Naive thymus-derived CD4-positive, alpha-beta T cell (primary cell): ENCODE measurements at regions of chr6 and their contacts with region 1.

Region 1: DNA sequence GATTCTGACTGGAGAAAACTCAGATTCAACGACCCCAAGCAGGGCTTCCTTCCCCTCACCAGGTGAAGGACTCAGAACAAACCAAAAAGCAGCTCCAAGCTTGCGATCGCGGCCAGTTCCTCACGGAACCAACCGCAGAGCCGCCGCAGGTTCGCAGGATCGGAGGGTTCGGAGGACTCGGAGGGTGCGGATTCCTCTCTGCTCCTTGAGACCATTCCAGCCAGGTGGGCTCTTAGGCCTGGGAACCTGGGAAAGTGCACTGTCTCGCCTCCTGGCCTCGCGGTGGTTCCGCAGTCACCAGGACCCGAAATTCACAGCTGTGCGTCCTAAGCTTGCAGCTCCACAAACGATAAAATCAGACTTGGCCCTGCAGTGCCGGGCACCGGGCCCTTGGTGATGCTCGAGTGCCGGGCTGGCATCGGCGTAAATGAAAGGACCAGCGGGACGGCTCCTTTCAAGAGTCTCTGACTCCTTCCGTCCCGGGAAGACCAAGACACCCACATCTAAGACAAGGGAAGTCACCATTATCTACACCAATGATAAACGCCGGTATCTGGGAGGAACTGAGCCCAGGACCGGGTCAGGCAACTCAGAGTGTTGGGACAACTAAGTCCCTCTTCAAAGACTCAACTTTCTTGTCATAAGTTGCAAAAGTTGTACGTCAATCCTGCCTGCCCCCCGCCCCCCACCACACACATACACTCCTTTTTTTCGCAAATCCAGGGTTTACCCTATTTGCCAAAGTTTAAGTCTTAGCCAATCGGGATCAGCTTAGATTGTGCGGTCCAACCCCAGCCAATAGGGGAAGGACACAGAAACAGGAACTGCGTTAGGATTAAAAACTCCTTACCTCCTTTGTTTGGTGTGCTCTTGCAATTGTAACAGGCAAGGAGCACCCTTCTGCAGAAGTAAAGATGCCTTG is 69.8 kb upstream of the PRSS16 start:
- DNase-seq: peak; percentile 49 to 78 (median 66)
- ATAC-seq: peak; percentile 83
- H3K4me3 ChIP-seq: peak overlapping the region; percentile 99
- H3K4me3 Mint-ChIP-seq: peak overlapping the region; percentile 90 to 98 (median 96)
- H3K27ac ChIP-seq: peak overlapping the region; percentile 74
- H3K27ac Mint-ChIP-seq: peak overlapping the region; percentile 79 to 100 (median 95)
- H3K4me1 ChIP-seq: peaks cover 0 to 3% of the 10 kb centered on the region in 2 donors
- H3K4me1 Mint-ChIP-seq: peaks cover 0 to 33% (median 14%) of the 10 kb centered on the region in 7 donors
- H3K27me3 ChIP-seq: no peaks in the 10 kb centered on the region
- H3K27me3 Mint-ChIP-seq: peaks cover 0 to 37% (median 0%) of the 10 kb centered on the region in 5 donors

Region 2: DNA sequence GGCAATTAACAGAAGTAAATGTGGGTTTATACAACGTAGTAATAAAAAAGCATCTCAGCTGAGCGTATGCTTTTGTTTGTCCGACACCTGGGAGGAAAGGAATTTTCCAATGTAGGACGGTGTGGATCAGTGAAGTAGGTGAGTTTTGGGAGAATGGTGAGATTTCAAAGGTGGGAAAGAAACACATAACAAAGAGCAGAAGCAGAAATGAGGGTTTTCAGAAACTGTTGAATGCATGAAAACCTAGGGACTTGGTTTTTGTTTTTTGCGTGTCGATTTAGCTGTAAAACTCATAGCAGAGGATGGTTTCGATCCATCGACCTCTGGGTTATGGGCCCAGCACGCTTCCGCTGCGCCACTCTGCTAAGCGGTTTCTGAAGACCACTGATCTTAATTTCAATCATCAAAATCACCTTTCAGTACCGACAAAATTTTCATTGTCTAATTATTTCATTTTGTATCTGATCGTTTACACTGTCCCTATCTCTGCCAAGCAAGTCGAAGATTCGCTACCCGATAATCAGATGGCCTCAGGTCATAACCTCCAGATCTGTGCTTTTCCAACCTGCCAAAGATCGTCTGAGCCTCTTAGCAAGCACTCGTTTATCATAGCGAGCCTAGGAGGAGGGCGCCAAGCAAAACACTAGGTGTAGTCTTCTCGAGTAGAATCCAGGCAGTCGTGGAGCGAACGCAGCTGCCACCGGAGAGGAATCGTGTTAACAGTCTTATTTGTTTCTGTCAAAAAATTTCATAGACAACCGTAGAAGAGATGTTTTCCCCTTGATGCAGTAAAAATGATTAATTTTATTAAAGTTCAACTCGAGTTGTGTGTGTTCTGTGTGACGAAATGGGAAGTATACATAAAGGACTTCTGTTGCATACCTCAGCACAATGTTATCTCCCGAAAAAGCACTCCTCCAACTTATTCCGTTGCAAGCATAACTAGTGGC is 155.2 kb after region 1 on chr6:
- CTCF ChIA-PET with region 1: no interaction called
- POLR2A ChIA-PET with region 1: interaction called, 3 read pairs
- intact Hi-C with region 1: loop called in 1 of 2 experiments (anchors 5 kb)
- DNase-seq: peak in 8 of 9 donors; percentile 18 to 79 (median 68)
- ATAC-seq: peak; percentile 74
- H3K4me3 ChIP-seq: peak overlapping the region; percentile 60
- H3K4me3 Mint-ChIP-seq: peak overlapping the region; percentile 67 to 94 (median 87)
- H3K27ac ChIP-seq: no peak overlapping the region
- H3K27ac Mint-ChIP-seq: peak overlapping the region; percentile 0 to 97 (median 84)
- H3K4me1 ChIP-seq: peaks cover 0 to 3% of the 10 kb centered on the region in 2 donors
- H3K4me1 Mint-ChIP-seq: peaks cover 7 to 21% (median 13%) of the 10 kb centered on the region in 7 donors
- H3K27me3 ChIP-seq: peaks cover 0 to 8% of the 10 kb centered on the region in 2 donors
- H3K27me3 Mint-ChIP-seq: peaks cover 21 to 53% (median 25%) of the 10 kb centered on the region in 5 donors

Region 3: DNA sequence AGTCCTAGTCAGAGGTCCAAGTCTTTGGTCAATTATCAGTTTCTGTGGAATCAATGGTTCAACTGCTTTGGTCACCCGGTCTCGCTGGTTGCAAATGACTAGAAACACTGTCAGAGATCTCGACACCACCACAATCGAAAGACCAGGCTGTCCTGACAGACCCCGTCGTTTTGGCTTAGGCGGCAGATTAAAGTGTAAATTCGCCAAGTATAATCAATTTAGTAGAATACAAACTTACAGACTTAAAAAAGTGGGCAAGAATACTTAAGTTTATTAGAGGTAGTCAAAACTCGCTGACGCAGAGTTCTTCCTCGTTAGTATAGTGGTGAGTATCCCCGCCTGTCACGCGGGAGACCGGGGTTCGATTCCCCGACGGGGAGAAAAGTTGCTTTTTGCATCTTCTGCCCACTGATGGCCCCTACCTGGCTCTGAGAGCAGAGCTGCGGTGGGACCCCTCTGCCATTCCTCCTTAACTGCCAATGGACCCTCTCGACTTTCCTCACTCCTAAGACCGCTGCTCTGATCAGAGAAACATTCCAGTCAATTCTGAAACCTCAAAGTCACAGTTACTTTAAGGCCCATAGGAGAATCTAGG is 325.8 kb after region 1 on chr6:
- CTCF ChIA-PET with region 1: interaction called, 5 read pairs
- POLR2A ChIA-PET with region 1: no interaction called
- intact Hi-C with region 1: loop called (anchors 1 to 5 kb)
- DNase-seq: peak; percentile 73 to 86 (median 80)
- ATAC-seq: peak; percentile 75
- H3K4me3 ChIP-seq: peak overlapping the region; percentile 61
- H3K4me3 Mint-ChIP-seq: peak overlapping the region; percentile 85 to 99 (median 91)
- H3K27ac ChIP-seq: peak overlapping the region; percentile 57
- H3K27ac Mint-ChIP-seq: peak overlapping the region; percentile 82 to 97 (median 91)
- H3K4me1 ChIP-seq: peaks cover 6% of the 10 kb centered on the region in 2 donors
- H3K4me1 Mint-ChIP-seq: peaks cover 15 to 41% (median 36%) of the 10 kb centered on the region in 7 donors
- H3K27me3 ChIP-seq: no peaks in the 10 kb centered on the region
- H3K27me3 Mint-ChIP-seq: peaks cover 5 to 62% (median 11%) of the 10 kb centered on the region in 5 donors

Region 4: GRCh38 chr6:27518881-27519795 is 341.4 kb after region 1 on chr6:
- CTCF ChIA-PET with region 1: no interaction called
- POLR2A ChIA-PET with region 1: no interaction called
- intact Hi-C with region 1: loop called in 1 of 2 experiments (anchors 1 kb)
- DNase-seq: peak; percentile 34 to 79 (median 68)
- ATAC-seq: peak; percentile 81
- H3K4me3 ChIP-seq: peak overlapping the region; percentile 96
- H3K4me3 Mint-ChIP-seq: peak overlapping the region; percentile 84 to 97 (median 91)
- H3K27ac ChIP-seq: peak overlapping the region; percentile 67
- H3K27ac Mint-ChIP-seq: peak overlapping the region; percentile 68 to 94 (median 84)
- H3K4me1 ChIP-seq: peaks cover 7 to 11% of the 10 kb centered on the region in 2 donors
- H3K4me1 Mint-ChIP-seq: peaks cover 0 to 31% (median 18%) of the 10 kb centered on the region in 7 donors
- H3K27me3 ChIP-seq: peaks cover 0 to 3% of the 10 kb centered on the region in 2 donors
- H3K27me3 Mint-ChIP-seq: peaks cover 0 to 40% (median 22%) of the 10 kb centered on the region in 5 donors